Activated CD8-positive, alpha-beta T cell treated with anti-CD3 and anti-CD28 coated beads, Interleukin-2, amount 10 ng/mL, durations not matched to agents 7 days and 5 days (primary cell): ENCODE measurements at regions of chr1 and their contacts with region 1.

Region 1: GRCh38 chr1:211382714-211383480 is 56.3 kb downstream of the TRAF5 start:
- DNase-seq: peak; percentile 85
- ATAC-seq: peak; percentile 94
- H3K4me3 Mint-ChIP-seq: peak overlapping the region; percentile 87
- H3K27ac Mint-ChIP-seq: peak overlapping the region; percentile 88
- H3K4me1 Mint-ChIP-seq: peaks cover 23% of the 10 kb centered on the region
- H3K27me3 Mint-ChIP-seq: peaks cover 2% of the 10 kb centered on the region

Region 2: GRCh38 chr1:211335522-211336157 is 47.3 kb before region 1 on chr1:
- CTCF ChIA-PET with region 1: interaction called, 3 read pairs
- POLR2A ChIA-PET with region 1: interaction called, 11 read pairs
- DNase-seq: peak; percentile 59
- ATAC-seq: peak; percentile 84
- H3K4me3 Mint-ChIP-seq: peak overlapping the region; percentile 63
- H3K27ac Mint-ChIP-seq: peak overlapping the region; percentile 89
- H3K4me1 Mint-ChIP-seq: peaks cover 88% of the 10 kb centered on the region
- H3K27me3 Mint-ChIP-seq: no peaks in the 10 kb centered on the region